Activated T-helper 2 cell treated with anti-CD3 and anti-CD28 coated beads, Interferon-gamma antibody, Interleukin-2, Interleukin-4, amounts not matched to agents 10 μg/mL and 5 μg/mL and 100 μg/mL, durations not matched to agents 14 hours and 24 hours and 36 hours (primary cell): ENCODE measurements at regions of chr7 and their contacts with region 1.

Region 1: GRCh38 chr7:108135446-108136190 is 5.5 kb upstream of the LAMB4 start:
- DNase-seq: peak; percentile 27
- H3K4me3 Mint-ChIP-seq: peak overlapping the region; percentile 55
- H3K27ac Mint-ChIP-seq: peak overlapping the region; percentile 93
- H3K4me1 Mint-ChIP-seq: peaks cover 38% of the 10 kb centered on the region
- H3K27me3 Mint-ChIP-seq: peaks cover 30% of the 10 kb centered on the region

Region 2: DNA sequence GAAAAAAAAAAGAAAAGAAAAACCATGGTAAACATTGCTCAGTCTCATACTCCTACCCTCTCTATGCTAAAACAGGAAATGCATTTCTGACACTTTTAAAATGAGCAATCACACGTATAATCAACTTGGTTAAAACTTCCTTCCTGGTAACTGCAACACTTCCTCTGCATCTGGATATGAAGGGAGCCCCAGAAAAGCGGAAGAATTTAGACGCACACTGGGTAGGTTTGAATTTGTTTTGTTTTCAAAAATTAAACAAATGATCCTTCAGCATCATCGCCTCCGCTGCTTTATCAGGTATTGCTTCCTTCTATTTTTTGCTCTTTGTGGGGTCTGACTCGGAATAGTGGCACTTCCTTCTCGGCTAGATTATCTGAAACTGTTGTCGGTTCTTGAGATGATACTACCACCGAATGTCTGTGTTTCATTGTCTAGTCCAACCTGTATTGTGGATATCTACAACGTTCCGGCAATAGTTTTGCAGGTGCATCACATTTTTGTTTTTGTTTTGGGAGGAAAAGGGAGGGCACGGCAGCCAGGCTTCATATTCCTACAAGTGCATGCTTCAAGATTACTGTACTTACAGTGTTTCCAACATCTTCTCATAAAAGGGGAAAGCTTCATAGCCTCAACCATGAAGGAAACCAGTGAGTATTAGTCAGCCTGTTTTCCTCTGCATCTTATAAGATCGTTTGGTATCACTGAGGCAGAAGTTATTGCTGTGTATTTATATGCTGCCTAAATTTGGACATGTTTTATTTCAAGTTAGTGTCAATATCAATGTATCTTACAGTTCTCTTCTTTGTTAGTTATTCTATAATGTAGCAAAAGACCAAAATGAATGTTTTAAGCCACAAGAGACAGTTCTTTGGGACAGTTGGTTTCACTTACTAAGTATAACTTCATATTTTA is 1270.2 kb before region 1 on chr7 and contains the start of gene PIK3CG:
- intact Hi-C with region 1: loop called (anchors 10 kb)
- DNase-seq: peak; percentile 16
- H3K4me3 Mint-ChIP-seq: peak within 1 kb of the TSS; percentile 91
- H3K27ac Mint-ChIP-seq: peak within 1 kb of the TSS; percentile 85
- H3K4me1 Mint-ChIP-seq: peaks cover 41% of the 10 kb centered on the region
- H3K27me3 Mint-ChIP-seq: no peaks in the 10 kb centered on the region
- total RNA-seq, gene PIK3CG: 36.6 and 36.7 TPM in 2 replicates

Region 3: DNA sequence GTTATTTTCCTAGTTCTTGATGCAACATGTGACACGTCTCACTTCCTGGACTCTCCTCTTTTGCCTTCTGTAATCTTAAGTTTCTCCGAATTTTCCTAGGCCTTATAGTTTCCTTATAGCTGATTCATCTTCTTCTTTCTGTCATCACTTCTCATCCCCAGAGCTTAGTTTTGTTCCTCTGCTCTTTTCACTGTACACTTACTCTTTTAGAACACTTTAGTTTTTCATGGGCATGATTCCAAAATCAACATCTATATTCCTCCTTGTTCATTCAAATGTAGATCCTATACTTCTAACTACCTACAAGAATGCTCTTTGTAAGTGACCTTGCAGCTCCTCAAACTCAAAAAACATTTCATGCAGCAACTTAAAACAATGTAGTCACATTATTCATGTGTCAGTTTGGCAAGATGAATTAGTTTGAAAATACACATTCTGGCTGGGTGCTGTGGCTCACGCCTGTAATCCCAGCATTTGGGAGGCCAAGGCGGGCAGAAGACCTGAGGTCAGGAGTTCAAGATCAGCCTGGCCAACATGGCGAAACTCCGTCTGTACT is 319.5 kb before region 1 on chr7:
- intact Hi-C with region 1: loop called (anchors 2 kb)
- DNase-seq: no peak
- H3K4me3 Mint-ChIP-seq: no peak overlapping the region
- H3K27ac Mint-ChIP-seq: peak overlapping the region; percentile 75
- H3K4me1 Mint-ChIP-seq: peaks cover 21% of the 10 kb centered on the region
- H3K27me3 Mint-ChIP-seq: peaks cover 2% of the 10 kb centered on the region

Region 4: DNA sequence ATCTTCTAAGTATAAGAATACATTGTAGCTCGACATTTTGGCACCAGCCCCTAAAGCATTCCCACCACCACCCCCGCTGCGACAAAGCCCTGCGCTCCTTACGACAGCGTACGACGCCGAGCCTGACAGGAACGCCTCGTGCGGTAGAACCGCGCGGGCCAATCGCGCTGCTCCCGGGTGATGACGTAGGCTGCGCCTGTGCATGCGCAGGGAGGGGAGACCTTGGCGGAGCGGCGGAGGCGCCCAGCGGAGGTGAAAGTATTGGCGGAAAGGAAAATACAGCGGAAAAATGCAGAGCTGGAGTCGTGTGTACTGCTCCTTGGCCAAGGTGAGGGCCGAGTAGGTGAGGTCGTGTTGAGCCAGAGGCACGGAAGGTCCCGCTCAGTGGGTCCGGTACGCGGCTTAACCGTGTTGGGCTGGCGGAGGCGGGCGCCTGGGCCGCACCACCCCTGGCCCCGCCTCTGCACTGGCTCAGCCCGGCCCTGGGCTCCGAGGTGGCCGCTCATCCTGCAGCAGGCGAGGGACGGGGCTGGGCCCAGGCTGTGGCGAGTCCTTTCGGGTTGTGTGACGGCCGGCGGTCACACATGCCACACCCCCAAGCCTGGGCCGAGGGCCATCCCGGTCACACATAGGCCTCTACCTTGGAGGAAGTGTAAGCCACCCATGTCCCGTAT is 244.5 kb before region 1 on chr7 and contains the start of gene DLD:
- intact Hi-C with region 1: loop called (anchors 5 kb)
- DNase-seq: peak; percentile 92
- H3K4me3 Mint-ChIP-seq: peak within 1 kb of the TSS; percentile 93
- H3K27ac Mint-ChIP-seq: peak within 1 kb of the TSS; percentile 99
- H3K4me1 Mint-ChIP-seq: peaks cover 45% of the 10 kb centered on the region
- H3K27me3 Mint-ChIP-seq: no peaks in the 10 kb centered on the region
- total RNA-seq, gene DLD: 104 and 108 TPM in 2 replicates

Region 5: GRCh38 chr7:107934991-107935770 is 200.4 kb before region 1 on chr7:
- intact Hi-C with region 1: loop called (anchors 5 kb)
- DNase-seq: no peak
- H3K4me3 Mint-ChIP-seq: no peak overlapping the region
- H3K27ac Mint-ChIP-seq: no peak overlapping the region
- H3K4me1 Mint-ChIP-seq: peaks cover 23% of the 10 kb centered on the region
- H3K27me3 Mint-ChIP-seq: no peaks in the 10 kb centered on the region

Region 6: DNA sequence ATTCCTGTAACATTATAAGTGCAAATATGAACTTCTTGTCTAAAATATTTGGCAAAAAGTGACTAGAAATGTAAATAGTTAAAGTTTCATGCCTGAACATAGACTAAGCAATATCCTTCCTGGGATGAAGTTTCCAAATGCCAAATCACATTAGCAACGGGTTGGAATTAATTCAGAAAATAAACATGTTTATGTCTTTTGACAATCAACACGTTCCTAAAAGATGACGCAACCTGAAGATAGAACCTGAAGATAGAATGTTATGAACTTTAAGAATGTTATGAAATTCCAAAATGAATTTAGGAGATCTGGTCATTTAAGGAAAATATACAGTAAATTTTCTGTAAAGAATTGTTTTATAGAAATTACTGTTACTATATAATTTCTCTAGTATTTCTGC is 14.7 kb before region 1 on chr7:
- intact Hi-C with region 1: loop called (anchors 1 kb)
- DNase-seq: no peak
- H3K4me3 Mint-ChIP-seq: no peak overlapping the region
- H3K27ac Mint-ChIP-seq: no peak overlapping the region
- H3K4me1 Mint-ChIP-seq: peaks cover 15% of the 10 kb centered on the region
- H3K27me3 Mint-ChIP-seq: peaks cover 21% of the 10 kb centered on the region

Region 7: DNA sequence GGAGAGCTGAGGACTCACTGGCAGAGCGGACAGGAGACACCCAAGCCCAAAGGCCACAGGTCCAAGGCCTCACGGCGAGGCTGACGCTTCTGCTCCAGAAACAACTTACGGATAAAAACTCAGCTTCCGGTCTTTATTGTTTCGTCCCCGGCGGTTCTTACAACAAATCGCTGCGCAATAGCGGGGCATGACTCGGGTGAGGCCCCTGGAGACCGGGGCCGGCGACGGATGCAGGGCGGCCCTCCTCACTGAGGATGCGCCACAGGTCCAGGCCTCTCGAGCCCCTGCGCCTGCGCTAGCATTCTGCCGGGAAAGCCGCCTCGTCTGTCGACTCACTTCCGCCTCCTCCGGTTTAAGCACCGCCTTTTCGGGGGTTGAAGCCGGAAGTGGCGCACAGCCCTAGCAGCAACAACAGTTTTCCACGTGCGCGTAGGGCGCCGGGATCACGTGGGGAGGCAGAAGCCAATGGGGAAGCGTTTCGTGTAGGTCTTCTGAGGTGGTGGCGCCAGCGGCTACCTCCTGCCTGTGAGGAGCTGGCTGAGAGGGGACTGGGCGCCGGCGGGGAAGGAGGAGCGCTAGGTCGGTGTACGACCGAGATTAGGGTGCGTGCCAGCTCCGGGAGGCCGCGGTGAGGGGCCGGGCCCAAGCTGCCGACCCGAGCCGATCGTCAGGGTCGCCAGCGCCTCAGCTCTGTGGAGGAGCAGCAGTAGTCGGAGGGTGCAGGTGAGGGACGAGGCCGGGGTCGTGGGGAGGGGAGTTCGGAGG is 433.9 kb after region 1 on chr7 and contains the starts of genes DNAJB9 and THAP5:
- intact Hi-C with region 1: loop called (anchors 2 kb)
- DNase-seq: peak; percentile 100
- H3K4me3 Mint-ChIP-seq: peak within 1 kb of the TSS; percentile 99
- H3K27ac Mint-ChIP-seq: peak within 1 kb of the TSS; percentile 99
- H3K4me1 Mint-ChIP-seq: peaks cover 39% of the 10 kb centered on the region
- H3K27me3 Mint-ChIP-seq: no peaks in the 10 kb centered on the region
- total RNA-seq, gene DNAJB9: 19.4 and 19.9 TPM in 2 replicates
- total RNA-seq, gene THAP5: 33.8 and 35.4 TPM in 2 replicates